Psoas muscle (tissue), 8 donors: ENCODE measurements at regions of chr9 and their contacts with region 1.

Region 1: GRCh38 chr9:37800631-37801286 is at the start of gene DCAF10:
- DNase-seq: peak; percentile 90 to 93
- ATAC-seq: peak; percentile 96 to 98 (median 97)
- H3K4me3 ChIP-seq: peak within 1 kb of the TSS; percentile 82
- H3K27ac ChIP-seq: peak within 1 kb of the TSS; percentile 82
- H3K4me1 ChIP-seq: peaks cover 21% of the 10 kb centered on the region
- H3K27me3 ChIP-seq: no peaks in the 10 kb centered on the region
- CTCF ChIP-seq: no peak
- total RNA-seq, gene DCAF10: 20.2 to 27.2 (median 22.4) TPM

Region 2: GRCh38 chr9:37753489-37754190 is 47.1 kb before region 1 on chr9 and contains the start of gene TRMT10B:
- intact Hi-C with region 1: loop called in 1 of 2 experiments (anchors 5 kb)
- DNase-seq: peak; percentile 72 to 82
- ATAC-seq: peak; percentile 84 to 98 (median 93)
- H3K4me3 ChIP-seq: peak within 1 kb of the TSS; percentile 86
- H3K27ac ChIP-seq: peak within 1 kb of the TSS; percentile 86
- H3K4me1 ChIP-seq: no peaks in the 10 kb centered on the region
- H3K27me3 ChIP-seq: no peaks in the 10 kb centered on the region
- CTCF ChIP-seq: no peak
- total RNA-seq, gene TRMT10B: 1.3 to 5.5 (median 2.8) TPM